ENCODE measurements at regions of chr5 and their contacts with region 1.

Region 1: GRCh38 chr5:139633295-139634027 is 14.7 kb upstream of the CXXC5 start:
- DNase-seq: no peak
- H3K4me3 ChIP-seq: no peak overlapping the region
- H3K27ac ChIP-seq: no peak overlapping the region
- H3K4me1 ChIP-seq: peaks cover 31 to 48% (median 34%) of the 10 kb centered on the region in 3 donors
- H3K27me3 ChIP-seq: no peaks in the 10 kb centered on the region
- CTCF ChIP-seq: peak; percentile 94 to 98 (median 97)
- POLR2A ChIP-seq: no peak

Region 2: DNA sequence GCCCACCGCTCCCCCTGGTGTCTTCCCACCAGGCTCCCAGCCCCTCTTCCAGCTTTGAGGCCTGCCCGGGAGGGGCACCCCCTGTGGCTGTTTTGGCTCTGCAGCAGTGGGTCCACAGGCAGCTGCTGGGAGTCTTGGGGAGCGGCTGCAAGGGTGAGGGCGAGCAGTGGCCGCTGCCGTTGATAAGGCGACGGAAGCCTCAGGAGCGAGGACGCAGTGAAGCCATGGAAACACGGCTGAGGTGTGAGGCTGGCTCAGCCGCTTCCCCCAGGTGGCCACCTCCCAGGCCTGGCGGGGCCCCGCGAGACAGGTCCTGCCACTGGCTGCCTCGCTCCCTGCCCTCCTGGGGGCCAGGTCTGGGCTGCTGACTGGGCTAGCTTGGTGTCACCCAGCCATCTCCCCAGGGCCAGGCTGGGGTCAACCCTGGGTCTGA is 56.2 kb after region 1 on chr5:
- intact Hi-C with region 1: loop called (anchors 5 kb)
- DNase-seq: no peak
- H3K4me3 ChIP-seq: no peak overlapping the region
- H3K27ac ChIP-seq: peak overlapping the region in 1 of 4 donors; percentile 4
- H3K4me1 ChIP-seq: peaks cover 12 to 47% (median 16%) of the 10 kb centered on the region in 3 donors
- H3K27me3 ChIP-seq: no peaks in the 10 kb centered on the region
- CTCF ChIP-seq: no peak
- POLR2A ChIP-seq: no peak

Region 3: GRCh38 chr5:139765409-139766217 is 132.2 kb after region 1 on chr5:
- intact Hi-C with region 1: loop called (anchors 2 kb)
- DNase-seq: no peak
- H3K4me3 ChIP-seq: peak overlapping the region; percentile 38 to 67 (median 62)
- H3K27ac ChIP-seq: peak overlapping the region in 3 of 4 donors; percentile 43 to 75 (median 60)
- H3K4me1 ChIP-seq: peaks cover 0 to 27% (median 0%) of the 10 kb centered on the region in 3 donors
- H3K27me3 ChIP-seq: peaks cover 3 to 36% (median 10%) of the 10 kb centered on the region in 4 donors
- CTCF ChIP-seq: peak in 5 of 6 experiments; percentile 91 to 99 (median 97)
- POLR2A ChIP-seq: no peak

Measured in esophagus squamous epithelium (tissue), 5 donors.